H1 (cell line): ENCODE measurements at regions of chr18 and their contacts with region 1.

Region 1: DNA sequence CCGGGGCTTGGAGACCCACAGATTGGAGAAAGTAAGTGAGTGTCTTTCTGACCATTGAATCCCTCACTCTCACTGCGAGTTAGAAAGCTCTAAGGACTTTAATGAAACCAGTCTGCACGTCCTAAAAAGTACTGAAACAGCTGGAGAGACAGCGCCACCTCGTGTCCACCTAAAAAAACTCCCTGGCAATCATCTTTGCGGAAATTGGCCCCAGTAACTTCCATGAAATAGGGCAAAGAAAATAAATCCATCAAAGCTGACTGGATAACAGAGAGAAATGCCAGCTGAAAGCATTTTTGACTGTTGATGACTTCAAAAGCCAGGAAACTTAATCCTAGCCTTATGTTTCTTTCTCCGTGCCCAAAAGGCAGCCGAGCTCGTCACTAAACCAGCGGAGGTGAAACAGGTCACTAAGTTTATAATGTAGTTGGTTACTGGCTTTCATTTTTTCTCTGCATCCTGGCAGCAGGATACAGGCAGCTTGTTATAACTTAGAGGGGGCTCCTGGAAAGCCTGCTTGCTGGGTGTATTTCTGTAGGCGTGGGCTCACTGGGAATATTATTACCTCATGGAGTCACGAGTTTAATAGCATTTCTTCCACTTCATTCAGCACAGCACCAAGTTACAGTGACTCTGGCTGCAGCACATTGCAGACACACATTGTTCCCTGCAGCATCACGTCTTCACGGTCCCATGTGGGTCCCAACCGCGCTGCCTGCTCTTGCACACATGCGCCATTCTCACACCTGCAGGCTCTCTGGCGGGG is 266.5 kb downstream of the HRH4 start:
- DNase-seq: peak in 1 of 2 experiments; percentile 71
- H3K4me3 ChIP-seq: no peak overlapping the region
- H3K27ac ChIP-seq: no peak overlapping the region
- H3K4me1 ChIP-seq: no peaks in the 10 kb centered on the region; a peak in 1 of 7 replicates
- H3K27me3 ChIP-seq: no peaks in the 10 kb centered on the region
- CTCF ChIP-seq: peak; percentile 50 to 85 (median 80)
- EP300 ChIP-seq: no peak
- POLR2A ChIP-seq: no peak
- RAD21 ChIP-seq: peak; percentile 93 to 95

Region 2: GRCh38 chr18:24600076-24600654 is 126.7 kb before region 1 on chr18:
- CTCF ChIA-PET with region 1: interaction called, 166 read pairs
- POLR2A ChIA-PET with region 1: no interaction called
- DNase-seq: no peak
- H3K4me3 ChIP-seq: no peak overlapping the region
- H3K27ac ChIP-seq: no peak overlapping the region
- H3K4me1 ChIP-seq: peaks cover 0 to 7% (median 5%) of the 10 kb centered on the region in 4 experiments; a peak in 5 of 7 replicates
- H3K27me3 ChIP-seq: no peaks in the 10 kb centered on the region
- CTCF ChIP-seq: peak in 2 of 3 experiments; percentile 60 to 61; a peak in 2 of 4 replicates
- EP300 ChIP-seq: no peak
- POLR2A ChIP-seq: no peak
- RAD21 ChIP-seq: peak; percentile 79 to 80

Region 3: GRCh38 chr18:24741965-24742724 is 15.2 kb after region 1 on chr18:
- CTCF ChIA-PET with region 1: interaction called, 12 read pairs
- POLR2A ChIA-PET with region 1: no interaction called
- DNase-seq: no peak
- H3K4me3 ChIP-seq: no peak overlapping the region
- H3K27ac ChIP-seq: no peak overlapping the region
- H3K4me1 ChIP-seq: no peaks in the 10 kb centered on the region
- H3K27me3 ChIP-seq: no peaks in the 10 kb centered on the region
- CTCF ChIP-seq: no peak
- EP300 ChIP-seq: no peak
- POLR2A ChIP-seq: no peak
- RAD21 ChIP-seq: no peak